KBM-7 (cell line): ENCODE measurements at regions of chr5 and their contacts with region 1.

Region 1: DNA sequence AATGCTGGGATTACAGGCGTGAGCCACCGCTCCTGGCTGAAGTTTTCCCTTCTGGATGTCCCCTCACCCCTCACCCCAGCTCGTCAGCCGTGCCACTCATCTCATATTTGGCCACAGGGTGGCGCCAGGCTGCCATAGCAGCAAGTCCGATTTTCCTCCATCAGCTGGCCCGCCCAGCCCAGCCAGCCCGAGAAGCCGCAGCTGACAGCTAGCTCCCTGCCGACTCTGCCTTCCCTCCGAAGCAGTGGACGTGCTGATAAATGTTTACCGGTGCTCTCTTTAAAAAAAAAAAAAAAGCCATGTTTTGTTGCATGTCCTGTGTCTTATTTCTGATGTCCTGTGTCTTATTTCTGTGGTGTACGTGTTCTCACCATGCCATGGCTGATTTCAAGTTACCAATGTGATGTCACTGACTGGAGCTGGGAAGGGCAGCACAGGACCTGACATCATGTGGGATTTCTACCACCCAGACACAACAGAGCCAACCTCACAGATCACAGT is 58.3 kb downstream of the PFDN1 start:
- DNase-seq: peak; percentile 83

Region 2: DNA sequence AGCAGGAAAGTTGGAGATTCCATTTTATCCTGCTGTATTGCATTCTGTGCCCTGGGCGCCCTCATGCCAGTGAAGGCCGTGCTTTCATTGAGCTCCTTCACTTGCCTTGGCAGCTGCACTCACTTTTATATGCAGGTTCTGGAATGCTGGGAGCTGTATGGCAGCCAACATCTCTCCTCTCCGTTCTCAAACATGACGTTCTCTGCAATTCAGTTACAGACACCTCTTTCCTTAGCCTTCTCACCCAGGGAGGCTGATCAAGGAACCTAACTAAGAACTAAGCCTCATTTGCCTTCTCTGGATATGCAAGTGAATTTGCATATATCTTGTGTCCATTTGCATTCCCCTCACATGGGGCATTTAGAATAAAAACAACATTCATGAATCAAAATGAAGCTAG is 160.0 kb before region 1 on chr5:
- in situ Hi-C with region 1: no loop called
- DNase-seq: no peak

Region 3: DNA sequence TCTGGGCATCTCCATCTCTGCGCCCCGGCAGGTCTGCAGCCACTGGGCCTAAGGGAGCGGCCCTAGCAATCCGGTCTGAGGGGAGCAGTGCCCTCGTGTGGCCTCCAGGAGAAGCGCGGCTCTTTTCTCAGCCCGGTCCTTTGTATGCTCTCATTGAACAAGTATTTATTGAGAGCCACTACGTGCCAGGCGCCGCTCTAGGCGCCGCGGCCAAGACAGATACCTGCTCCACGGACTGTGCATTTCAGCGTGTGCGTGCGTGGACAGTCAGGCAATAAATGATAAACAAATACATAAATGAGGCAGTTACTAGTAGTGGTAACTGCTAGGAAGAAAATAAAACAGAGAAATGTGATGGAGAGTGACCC is 113.1 kb after region 1 on chr5:
- in situ Hi-C with region 1: loop called (anchors 10 kb)
- DNase-seq: peak; percentile 90

Region 4: DNA sequence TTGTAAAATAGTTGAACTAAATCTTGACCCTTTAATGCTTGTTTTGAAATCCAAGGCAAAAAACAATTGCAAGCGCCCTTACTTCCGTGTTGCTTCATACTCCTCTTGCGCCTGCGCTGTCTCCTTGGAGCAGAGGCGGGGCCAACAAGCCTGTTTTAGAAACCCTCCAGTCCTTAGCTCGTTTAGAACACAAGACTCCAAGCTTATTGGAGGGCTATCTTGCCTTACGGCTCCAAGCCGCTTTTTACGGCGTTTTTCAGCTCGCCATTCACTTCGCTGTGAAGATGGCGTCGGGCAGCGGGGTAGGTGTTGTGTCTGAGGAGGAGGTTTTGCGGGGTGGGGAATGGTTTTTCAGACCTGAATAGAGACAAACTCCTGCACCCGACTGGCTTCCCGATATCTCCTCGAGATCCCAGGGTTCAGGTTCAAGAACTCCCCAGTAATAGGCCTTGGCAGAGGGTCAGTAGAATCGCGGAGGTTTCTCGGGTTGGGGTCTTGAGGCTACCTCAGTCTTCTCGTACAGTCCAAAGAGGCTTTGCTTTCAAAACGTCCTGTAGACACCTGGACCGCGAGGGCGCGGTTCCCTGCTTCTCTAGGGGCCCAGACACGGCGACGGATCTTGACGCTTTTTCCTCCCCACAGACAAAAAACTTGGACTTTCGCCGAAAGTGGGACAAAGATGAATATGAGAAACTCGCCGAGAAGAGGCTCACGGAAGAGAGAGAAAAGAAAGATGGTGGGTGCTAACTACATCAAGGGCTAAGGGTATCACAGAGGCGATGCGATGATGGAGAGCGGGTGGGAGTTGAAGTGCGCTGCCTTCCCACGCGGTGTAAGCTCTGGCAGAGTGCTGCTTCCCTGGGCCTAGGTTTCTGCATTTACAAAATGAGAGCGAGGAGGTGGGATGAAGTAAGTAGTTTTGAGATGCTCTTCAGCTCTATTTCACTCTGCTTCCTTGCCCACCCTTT is 455.9 kb after region 1 on chr5 and contains the start of gene ZMAT2:
- in situ Hi-C with region 1: loop called (anchors 25 kb)
- DNase-seq: peak; percentile 95